ENCODE measurements at regions of chrX and their contacts with region 1.

Region 1: DNA sequence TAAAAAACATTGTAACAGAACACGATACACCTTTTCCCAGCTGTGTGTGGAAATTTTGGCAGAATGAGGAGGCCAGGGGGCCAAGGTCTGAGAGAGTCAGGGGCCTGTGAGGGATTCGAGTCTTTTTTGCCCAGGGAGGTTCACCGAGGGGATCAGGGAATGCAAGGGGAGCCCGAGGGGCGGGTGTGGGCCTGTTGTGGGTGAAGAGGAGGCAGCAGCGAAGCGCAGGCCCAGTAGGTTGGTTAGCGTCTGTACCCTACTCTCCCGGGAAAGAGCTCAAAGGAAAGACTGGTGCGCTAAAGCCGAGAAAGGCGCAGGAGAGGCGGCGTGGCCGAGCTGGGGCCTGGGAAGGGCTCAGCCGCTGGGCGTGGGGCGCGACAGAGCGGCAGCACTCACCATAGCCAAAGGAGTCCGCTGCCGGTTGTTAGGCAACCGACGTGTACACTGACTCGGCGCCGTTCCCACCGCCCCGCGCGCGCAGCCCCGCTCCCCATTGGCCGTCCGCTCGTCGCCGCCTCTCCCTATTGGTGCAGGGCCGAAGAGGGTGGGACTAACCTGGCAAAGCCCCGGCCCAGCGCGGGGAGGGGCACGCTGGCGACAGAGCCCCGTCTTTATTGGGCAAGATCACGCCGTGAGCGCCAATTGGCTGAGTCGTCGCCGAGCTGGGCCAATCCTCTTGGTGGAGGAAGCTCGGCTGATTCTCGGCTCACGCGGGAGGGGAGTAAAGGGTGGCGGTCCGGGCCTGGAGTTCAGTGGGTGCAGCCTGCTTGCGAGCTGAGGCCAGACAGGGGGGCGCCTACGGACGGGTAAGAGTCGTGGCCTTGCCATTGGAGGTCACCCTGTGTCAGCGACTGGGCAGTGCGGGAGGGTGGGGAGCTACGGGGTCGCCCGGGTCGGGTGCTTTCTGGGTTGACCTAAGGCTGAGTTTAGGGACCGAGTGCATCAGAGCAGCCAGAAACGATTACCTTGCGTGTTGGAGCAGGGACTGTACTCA is at the starts of genes CETN2 and NSDHL:
- DNase-seq: peak; percentile 91
- H3K4me3 Mint-ChIP-seq: peak within 1 kb of the TSS; percentile 94
- H3K27ac Mint-ChIP-seq: peak within 1 kb of the TSS; percentile 90
- H3K4me1 Mint-ChIP-seq: peaks cover 19% of the 10 kb centered on the region
- H3K27me3 Mint-ChIP-seq: no peaks in the 10 kb centered on the region
- total RNA-seq, gene CETN2: 9.0 and 9.8 TPM in 2 replicates
- total RNA-seq, gene NSDHL: 24.0 and 24.9 TPM in 2 replicates

Region 2: DNA sequence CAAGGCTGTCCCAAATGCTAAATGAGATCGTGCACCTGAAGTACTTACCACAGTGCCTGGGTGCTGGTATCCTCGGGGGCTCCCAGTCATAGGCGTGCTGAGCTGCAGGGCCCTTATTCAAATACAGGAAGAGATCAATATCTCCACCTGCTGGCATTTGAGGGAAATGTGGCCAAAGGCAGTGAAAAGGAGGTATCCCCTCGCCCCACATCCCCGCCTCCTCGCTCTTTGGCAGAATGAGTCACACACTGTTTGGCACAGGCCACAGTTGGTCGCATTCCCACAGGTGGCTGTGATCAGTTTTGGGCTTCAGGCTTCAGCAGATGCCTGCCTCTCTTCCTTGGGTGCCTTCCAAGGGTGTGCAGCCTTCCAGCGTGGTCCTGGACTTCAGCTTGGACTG is 95.7 kb after region 1 on chrX:
- intact Hi-C with region 1: loop called (anchors 10 kb)
- DNase-seq: peak; percentile 9
- H3K4me3 Mint-ChIP-seq: no peak overlapping the region
- H3K27ac Mint-ChIP-seq: no peak overlapping the region
- H3K4me1 Mint-ChIP-seq: peaks cover 5% of the 10 kb centered on the region
- H3K27me3 Mint-ChIP-seq: peaks cover 5% of the 10 kb centered on the region

Region 3: DNA sequence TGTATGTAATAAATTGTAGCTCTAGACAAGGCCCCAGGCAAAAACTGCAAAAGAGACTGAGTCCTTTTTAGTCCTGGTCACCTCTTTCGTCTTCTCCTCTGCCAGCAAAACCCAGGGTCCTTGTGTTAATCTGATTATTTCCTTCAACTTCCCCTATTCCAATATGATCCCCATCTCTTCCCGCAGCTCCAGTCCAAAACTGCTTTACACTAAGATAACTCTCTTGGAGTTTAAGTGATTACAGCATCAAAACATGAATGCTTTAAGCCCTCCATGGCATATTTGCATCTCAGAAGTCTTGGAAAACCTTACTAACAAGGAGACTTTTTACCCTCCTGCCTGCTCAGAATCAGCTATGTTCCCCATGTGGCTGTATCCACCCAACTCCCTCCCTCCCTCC is 407.8 kb after region 1 on chrX:
- intact Hi-C with region 1: no loop called
- DNase-seq: no peak
- H3K4me3 Mint-ChIP-seq: no peak overlapping the region
- H3K27ac Mint-ChIP-seq: no peak overlapping the region
- H3K4me1 Mint-ChIP-seq: no peaks in the 10 kb centered on the region
- H3K27me3 Mint-ChIP-seq: peaks cover 12% of the 10 kb centered on the region

Measured in activated T-helper 1 cell treated with anti-CD3 and anti-CD28 coated beads, Interleukin-12 subunit alpha, Interleukin-12 subunit beta, Interleukin-2, Interleukin-4 antibody, amounts not matched to agents 30 ng/mL and 10 ng/mL and 1 ng/mL, durations not matched to agents 14 hours and 24 hours and 36 hours (primary cell).